H1 (cell line): ENCODE measurements at regions of chr12 and their contacts with region 1.

Region 1: DNA sequence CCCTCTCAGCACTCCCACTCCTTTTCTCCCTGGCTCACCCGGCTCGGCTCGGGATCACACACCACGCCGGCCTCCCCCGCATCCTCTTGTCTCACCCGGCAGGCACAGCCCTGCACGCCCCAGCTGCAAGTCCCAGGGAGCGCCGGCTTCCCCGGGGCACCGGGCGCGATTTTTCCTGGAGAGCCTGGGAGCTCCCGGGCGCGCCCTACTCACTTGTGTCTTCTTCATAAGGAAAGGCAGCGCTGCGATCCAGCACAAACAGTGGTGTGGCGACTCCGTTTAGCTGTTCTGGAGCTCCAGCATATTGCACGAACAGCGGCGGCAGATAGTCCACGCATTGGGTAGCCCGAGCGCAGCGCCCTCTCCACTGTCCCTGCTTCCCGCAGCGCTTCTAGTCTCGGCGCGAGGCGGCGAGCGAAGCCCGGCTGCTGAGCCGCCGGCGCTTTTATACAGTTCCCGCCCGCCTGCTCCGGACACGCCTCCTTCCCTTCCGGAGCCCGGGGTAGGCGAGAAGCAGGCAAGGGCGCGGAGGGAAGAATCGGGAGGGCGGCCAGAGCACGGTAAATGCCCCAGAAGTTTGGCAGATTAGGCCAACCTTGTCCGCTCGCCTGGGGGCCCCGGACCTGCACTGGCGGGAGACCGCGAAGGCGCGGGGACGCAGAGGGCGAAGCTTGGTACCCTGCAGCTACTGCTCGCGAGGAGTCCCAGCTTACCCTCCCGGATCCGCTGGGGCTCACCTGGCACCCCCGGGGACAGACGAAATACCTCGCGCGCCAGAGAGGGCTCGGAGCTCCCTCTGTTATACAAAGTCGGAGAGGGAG is at the start of gene KITLG:
- DNase-seq: peak; percentile 53 to 88
- H3K4me3 ChIP-seq: peak within 1 kb of the TSS; percentile 58 to 83 (median 71)
- H3K27ac ChIP-seq: 0 out of 2 replicates have a peak within 1 kb of the TSS, but pooled peaks have one; percentile 19
- H3K4me1 ChIP-seq: peaks cover 0 to 8% (median 2%) of the 10 kb centered on the region in 4 experiments; a peak in 3 of 7 replicates
- H3K27me3 ChIP-seq: peaks cover 0 to 2% (median 0%) of the 10 kb centered on the region in 4 experiments; a peak in 1 of 7 replicates
- CTCF ChIP-seq: no peak
- EP300 ChIP-seq: no peak
- POLR2A ChIP-seq: peak; percentile 34 to 82
- RAD21 ChIP-seq: peak in 1 of 2 experiments; percentile 33; a peak in 3 of 4 replicates
- total RNA-seq, gene KITLG: 7.8 TPM in 2 replicates

Region 2: DNA sequence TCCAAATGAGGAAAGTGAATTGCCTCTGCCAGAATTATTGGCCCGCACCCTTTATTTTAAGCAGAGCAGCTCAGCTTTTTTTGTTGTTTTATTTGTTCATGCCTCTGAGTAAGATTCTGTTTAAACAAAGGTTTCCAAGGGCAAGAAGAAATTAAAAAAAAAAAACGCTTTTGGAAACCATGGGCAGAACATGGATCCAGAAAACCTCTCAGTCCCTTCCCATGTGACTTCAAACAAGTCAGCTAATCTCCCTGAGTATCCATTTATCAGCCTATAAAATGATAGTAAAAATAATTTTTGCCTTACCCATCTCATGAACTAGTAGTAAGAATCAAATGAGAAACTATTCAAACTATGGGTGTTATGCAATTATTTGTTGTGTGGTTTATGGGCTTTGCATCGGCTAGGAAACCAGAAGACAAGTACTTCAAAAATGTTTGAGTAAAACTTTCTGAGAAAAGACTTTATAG is 27.6 kb before region 1 on chr12:
- CTCF ChIA-PET with region 1: interaction called, 14 read pairs
- POLR2A ChIA-PET with region 1: interaction called, 5 read pairs
- DNase-seq: no peak
- H3K4me3 ChIP-seq: no peak overlapping the region
- H3K27ac ChIP-seq: no peak overlapping the region
- H3K4me1 ChIP-seq: peaks cover 0 to 3% (median 0%) of the 10 kb centered on the region in 4 experiments; a peak in 1 of 7 replicates
- H3K27me3 ChIP-seq: no peaks in the 10 kb centered on the region
- CTCF ChIP-seq: no peak
- EP300 ChIP-seq: no peak
- POLR2A ChIP-seq: no peak
- RAD21 ChIP-seq: no peak

Region 3: GRCh38 chr12:88570103-88570502 is 10.2 kb before region 1 on chr12:
- CTCF ChIA-PET with region 1: interaction called, 12 read pairs
- POLR2A ChIA-PET with region 1: interaction called, 8 read pairs
- DNase-seq: no peak
- H3K4me3 ChIP-seq: no peak overlapping the region
- H3K27ac ChIP-seq: no peak overlapping the region
- H3K4me1 ChIP-seq: peaks cover 2 to 12% (median 7%) of the 10 kb centered on the region in 4 experiments; a peak in 3 of 7 replicates
- H3K27me3 ChIP-seq: no peaks in the 10 kb centered on the region
- CTCF ChIP-seq: no peak
- EP300 ChIP-seq: no peak
- POLR2A ChIP-seq: no peak
- RAD21 ChIP-seq: no peak